GM12878 (cell line): ENCODE measurements at regions of chr1 and their contacts with region 1.

Region 1: GRCh38 chr1:227999056-227999930 is 7.5 kb upstream of the WNT3A start:
- DNase-seq: peak; percentile 35
- ATAC-seq: peak; percentile 98
- H3K4me3 ChIP-seq: no peak overlapping the region
- H3K27ac ChIP-seq: no peak overlapping the region
- H3K4me1 ChIP-seq: no peaks in the 10 kb centered on the region
- H3K27me3 ChIP-seq: no peaks in the 10 kb centered on the region; a peak in 2 of 4 replicates
- CTCF ChIP-seq: peak; percentile 84 to 95 (median 91)
- EP300 ChIP-seq: no peak
- POLR2A ChIP-seq: no peak
- RAD21 ChIP-seq: peak; percentile 80

Region 2: GRCh38 chr1:228073857-228074545 is 74.7 kb after region 1 on chr1:
- CTCF ChIA-PET with region 1: interaction called, 16 read pairs
- POLR2A ChIA-PET with region 1: no interaction called
- RAD21 ChIA-PET with region 1: interaction called, 17 read pairs
- SMC1A ChIA-PET with region 1: interaction called, 4 read pairs
- in situ Hi-C with region 1: no loop called
- intact Hi-C with region 1: loop called (anchors 5 kb)
- DNase-seq: no peak
- ATAC-seq: peak; percentile 66
- H3K4me3 ChIP-seq: no peak overlapping the region
- H3K27ac ChIP-seq: no peak overlapping the region
- H3K4me1 ChIP-seq: no peaks in the 10 kb centered on the region
- H3K27me3 ChIP-seq: no peaks in the 10 kb centered on the region
- CTCF ChIP-seq: peak in 2 of 3 experiments; percentile 32 to 48; a peak in 3 of 6 replicates
- EP300 ChIP-seq: no peak
- POLR2A ChIP-seq: no peak
- RAD21 ChIP-seq: no peak

Region 3: GRCh38 chr1:228082135-228082891 is 83.0 kb after region 1 on chr1 and contains the start of gene ARF1:
- CTCF ChIA-PET with region 1: interaction called, 14 read pairs
- POLR2A ChIA-PET with region 1: no interaction called
- RAD21 ChIA-PET with region 1: no interaction called
- SMC1A ChIA-PET with region 1: interaction called, 5 read pairs
- in situ Hi-C with region 1: no loop called
- intact Hi-C with region 1: no loop called
- DNase-seq: peak; percentile 60
- ATAC-seq: peak; percentile 87
- H3K4me3 ChIP-seq: peak within 1 kb of the TSS; percentile 94
- H3K27ac ChIP-seq: peak within 1 kb of the TSS; percentile 96
- H3K4me1 ChIP-seq: peaks cover 31% of the 10 kb centered on the region
- H3K27me3 ChIP-seq: no peaks in the 10 kb centered on the region
- CTCF ChIP-seq: no peak
- EP300 ChIP-seq: 0 out of 4 replicates have a peak, but pooled peaks of 1 of the 2 experiments have one; percentile 10
- POLR2A ChIP-seq: peak; percentile 92
- RAD21 ChIP-seq: no peak
- polyA plus RNA-seq, gene ARF1: 48.4 to 97.3 TPM

Region 4: GRCh38 chr1:228090613-228091081 is 91.4 kb after region 1 on chr1:
- CTCF ChIA-PET with region 1: interaction called, 13 read pairs
- POLR2A ChIA-PET with region 1: no interaction called
- RAD21 ChIA-PET with region 1: no interaction called
- SMC1A ChIA-PET with region 1: no interaction called
- in situ Hi-C with region 1: no loop called
- intact Hi-C with region 1: no loop called
- DNase-seq: no peak
- ATAC-seq: peak; percentile 28
- H3K4me3 ChIP-seq: no peak overlapping the region
- H3K27ac ChIP-seq: no peak overlapping the region
- H3K4me1 ChIP-seq: peaks cover 48% of the 10 kb centered on the region
- H3K27me3 ChIP-seq: no peaks in the 10 kb centered on the region
- CTCF ChIP-seq: 0 out of 6 replicates have a peak, but pooled peaks of 1 of the 3 experiments have one; percentile 4
- EP300 ChIP-seq: no peak
- POLR2A ChIP-seq: no peak
- RAD21 ChIP-seq: 0 out of 2 replicates have a peak, but pooled peaks have one; percentile 2

Region 5: GRCh38 chr1:228120857-228121489 is 121.7 kb after region 1 on chr1:
- CTCF ChIA-PET with region 1: interaction called, 10 read pairs
- POLR2A ChIA-PET with region 1: no interaction called
- RAD21 ChIA-PET with region 1: no interaction called
- SMC1A ChIA-PET with region 1: no interaction called
- in situ Hi-C with region 1: no loop called
- intact Hi-C with region 1: no loop called
- DNase-seq: no peak
- ATAC-seq: peak; percentile 62
- H3K4me3 ChIP-seq: no peak overlapping the region
- H3K27ac ChIP-seq: no peak overlapping the region
- H3K4me1 ChIP-seq: no peaks in the 10 kb centered on the region
- H3K27me3 ChIP-seq: no peaks in the 10 kb centered on the region
- CTCF ChIP-seq: no peak
- EP300 ChIP-seq: no peak
- POLR2A ChIP-seq: no peak
- RAD21 ChIP-seq: no peak

Region 6: GRCh38 chr1:228165372-228166169 is 166.3 kb after region 1 on chr1 and contains the start of gene IBA57:
- CTCF ChIA-PET with region 1: interaction called, 40 read pairs
- POLR2A ChIA-PET with region 1: no interaction called
- RAD21 ChIA-PET with region 1: interaction called, 34 read pairs
- SMC1A ChIA-PET with region 1: interaction called, 3 read pairs
- in situ Hi-C with region 1: no loop called
- intact Hi-C with region 1: loop called (anchors 1 kb)
- DNase-seq: peak; percentile 93
- ATAC-seq: peak; percentile 90
- H3K4me3 ChIP-seq: peak within 1 kb of the TSS; percentile 95
- H3K27ac ChIP-seq: peak within 1 kb of the TSS; percentile 99
- H3K4me1 ChIP-seq: peaks cover 7% of the 10 kb centered on the region
- H3K27me3 ChIP-seq: no peaks in the 10 kb centered on the region
- CTCF ChIP-seq: peak; percentile 88 to 98 (median 92)
- EP300 ChIP-seq: peak; percentile 8 to 60; a peak in 2 of 4 replicates
- POLR2A ChIP-seq: peak; percentile 95
- RAD21 ChIP-seq: 0 out of 2 replicates have a peak, but pooled peaks have one; percentile 14
- polyA plus RNA-seq, gene IBA57: 0.51 to 0.60 TPM

Region 7: GRCh38 chr1:228515200-228515834 is 516.0 kb after region 1 on chr1:
- CTCF ChIA-PET with region 1: interaction called, 3 read pairs
- POLR2A ChIA-PET with region 1: no interaction called
- RAD21 ChIA-PET with region 1: interaction called, 5 read pairs
- SMC1A ChIA-PET with region 1: no interaction called
- in situ Hi-C with region 1: no loop called
- intact Hi-C with region 1: loop called (anchors 2 kb)
- DNase-seq: no peak
- ATAC-seq: peak; percentile 51; the same call in 2 of the 3 replicates
- H3K4me3 ChIP-seq: no peak overlapping the region
- H3K27ac ChIP-seq: no peak overlapping the region
- H3K4me1 ChIP-seq: no peaks in the 10 kb centered on the region
- H3K27me3 ChIP-seq: no peaks in the 10 kb centered on the region; a peak in 3 of 4 replicates
- CTCF ChIP-seq: peak; percentile 50 to 69 (median 55); a peak in 4 of 6 replicates
- EP300 ChIP-seq: no peak
- POLR2A ChIP-seq: no peak
- RAD21 ChIP-seq: peak; percentile 77